ENCODE measurements at regions of chr9 and their contacts with region 1.

Region 1: DNA sequence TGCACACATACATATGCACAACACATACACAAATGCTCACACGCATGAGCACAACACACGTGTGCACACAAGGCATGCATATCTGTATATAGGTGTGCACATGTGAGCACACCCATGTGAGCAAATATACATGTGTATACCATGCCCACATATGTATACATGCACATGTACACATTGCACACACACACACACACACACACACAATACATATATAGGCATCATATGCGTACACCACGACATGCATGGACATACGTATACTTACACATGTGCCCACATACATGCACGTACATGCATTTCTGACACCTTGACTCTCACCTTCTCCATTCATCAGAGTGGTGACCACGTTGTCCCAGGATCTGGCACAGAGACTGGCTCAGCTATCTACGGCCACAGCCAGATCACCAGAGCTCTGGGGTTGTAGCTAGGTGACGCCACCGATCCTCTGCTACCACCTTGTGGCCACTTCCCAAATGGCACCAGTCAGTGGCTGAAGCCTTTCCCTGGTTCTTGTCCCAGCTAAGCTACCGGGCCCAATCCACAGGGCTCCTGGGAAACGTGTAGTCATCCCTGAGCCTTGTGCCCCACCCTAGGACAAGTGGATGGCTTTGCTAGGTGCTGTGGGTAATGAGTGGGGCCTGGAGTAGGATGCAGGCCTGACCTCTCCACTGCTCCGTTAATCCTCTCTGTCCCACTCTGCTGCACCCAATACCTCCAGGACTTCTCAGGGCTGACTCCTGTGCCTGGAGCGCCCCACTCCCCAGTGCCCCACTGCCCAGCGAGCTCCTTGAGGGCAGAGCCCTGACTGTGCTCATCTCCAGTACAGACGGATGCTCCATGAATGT is 194.4 kb downstream of the RGS3 start:
- H3K4me3 ChIP-seq: no peak overlapping the region
- H3K27ac ChIP-seq: no peak overlapping the region
- H3K4me1 ChIP-seq: no peaks in the 10 kb centered on the region
- CTCF ChIP-seq: peak; percentile 85

Region 2: DNA sequence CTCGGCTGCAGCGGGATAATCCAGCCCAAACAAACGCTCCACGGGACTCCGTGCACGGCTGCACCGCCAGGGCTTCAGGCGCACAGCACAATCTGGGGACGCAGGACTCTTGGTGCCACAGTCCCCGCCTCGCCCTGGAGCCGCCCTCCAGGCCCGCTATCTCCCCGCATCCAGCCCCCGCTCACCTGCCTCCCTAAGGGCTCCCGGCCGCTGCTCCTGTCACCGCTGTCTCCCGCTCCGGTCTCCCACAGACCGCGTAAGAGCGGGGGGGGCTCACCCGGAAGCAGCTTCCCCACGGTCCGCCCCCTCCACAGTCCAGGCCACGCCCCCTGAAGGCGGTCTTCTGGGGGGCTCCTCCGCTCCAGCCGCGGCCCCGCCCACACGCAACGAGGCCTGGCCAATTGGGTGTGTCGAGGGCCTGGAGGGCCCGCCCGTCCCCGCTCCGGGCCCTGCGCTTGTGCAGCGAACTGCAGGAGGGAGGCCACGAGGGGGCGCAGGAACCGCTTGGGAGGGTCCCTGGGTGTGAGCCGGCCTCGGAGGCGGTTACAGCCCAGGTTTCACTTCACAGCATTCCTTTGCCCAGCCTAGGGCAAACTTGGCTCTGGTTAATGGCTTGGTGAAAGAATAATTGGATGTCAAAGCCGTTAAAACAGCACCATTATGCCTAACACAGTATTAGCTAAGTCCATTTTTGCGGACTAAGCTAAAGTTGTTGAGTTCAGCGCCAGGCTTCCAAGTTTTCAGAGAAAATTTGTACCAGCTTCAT is 256.7 kb before region 1 on chr9 and contains the start of gene ALAD:
- CTCF ChIA-PET with region 1: interaction called, 11 read pairs
- POLR2A ChIA-PET with region 1: no interaction called
- H3K4me3 ChIP-seq: peak within 1 kb of the TSS; percentile 88
- H3K27ac ChIP-seq: no peak within 1 kb of the TSS; the same call in 1 of the 2 replicates
- H3K4me1 ChIP-seq: peaks cover 2% of the 10 kb centered on the region; the same call in 1 of the 2 replicates
- CTCF ChIP-seq: peak; percentile 91

Region 3: GRCh38 chr9:113446323-113446740 is 211.6 kb before region 1 on chr9:
- CTCF ChIA-PET with region 1: interaction called, 174 read pairs
- POLR2A ChIA-PET with region 1: no interaction called
- H3K4me3 ChIP-seq: no peak overlapping the region
- H3K27ac ChIP-seq: no peak overlapping the region
- H3K4me1 ChIP-seq: no peaks in the 10 kb centered on the region
- CTCF ChIP-seq: no peak

Region 4: GRCh38 chr9:113578882-113579282 is 79.0 kb before region 1 on chr9:
- CTCF ChIA-PET with region 1: interaction called, 15 read pairs
- POLR2A ChIA-PET with region 1: no interaction called
- H3K4me3 ChIP-seq: no peak overlapping the region
- H3K27ac ChIP-seq: no peak overlapping the region
- H3K4me1 ChIP-seq: no peaks in the 10 kb centered on the region
- CTCF ChIP-seq: no peak

Region 5: GRCh38 chr9:113602126-113603044 is 55.5 kb before region 1 on chr9:
- CTCF ChIA-PET with region 1: interaction called, 831 read pairs
- POLR2A ChIA-PET with region 1: no interaction called
- H3K4me3 ChIP-seq: no peak overlapping the region
- H3K27ac ChIP-seq: no peak overlapping the region
- H3K4me1 ChIP-seq: peaks cover 6% of the 10 kb centered on the region
- CTCF ChIP-seq: no peak

Region 6: DNA sequence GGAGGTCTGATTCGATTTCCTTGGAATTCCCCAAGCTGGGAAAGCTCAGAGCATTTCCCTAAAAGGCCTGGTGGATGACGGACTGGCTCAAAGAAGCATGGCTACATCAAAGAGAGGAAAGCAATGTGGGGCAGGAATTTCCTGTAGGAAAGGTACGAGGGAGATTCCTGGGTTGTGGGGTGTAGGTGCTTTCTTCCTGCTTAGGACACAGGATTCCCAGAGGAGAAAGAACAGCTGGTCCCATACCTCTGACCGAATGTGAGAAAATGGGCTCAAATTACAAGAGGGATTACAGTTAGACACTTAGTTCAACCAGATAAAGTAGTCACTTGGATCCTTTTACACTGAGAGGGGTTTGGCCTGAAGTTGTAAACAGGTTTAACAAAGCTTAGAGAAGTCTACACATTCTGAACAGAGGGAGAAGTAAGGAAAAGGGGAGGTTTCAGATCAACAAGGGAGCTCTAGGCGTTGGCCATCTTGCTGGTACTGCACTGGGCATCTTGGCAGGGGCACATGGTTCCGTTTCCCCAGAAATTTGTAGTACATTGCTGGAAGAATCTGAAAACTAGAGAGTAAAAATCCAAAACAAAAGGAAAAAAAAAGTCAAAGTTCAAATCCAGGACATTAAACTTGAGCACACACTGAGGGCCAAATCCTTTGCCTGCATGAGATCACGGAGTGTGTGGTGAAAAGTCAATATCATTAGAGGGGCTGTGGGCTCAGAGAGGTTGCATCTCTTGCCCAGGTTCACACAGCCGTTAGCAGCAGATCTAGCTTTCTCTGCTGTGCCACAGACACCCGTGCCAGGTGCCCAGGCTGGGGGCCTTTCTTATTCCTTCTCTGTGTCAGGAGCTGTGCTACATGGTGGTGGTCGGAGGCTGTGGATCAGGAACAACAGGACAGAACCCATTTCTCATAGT is 23.1 kb before region 1 on chr9:
- CTCF ChIA-PET with region 1: interaction called, 17 read pairs
- POLR2A ChIA-PET with region 1: no interaction called
- H3K4me3 ChIP-seq: no peak overlapping the region
- H3K27ac ChIP-seq: no peak overlapping the region
- H3K4me1 ChIP-seq: no peaks in the 10 kb centered on the region
- CTCF ChIP-seq: no peak

Region 7: DNA sequence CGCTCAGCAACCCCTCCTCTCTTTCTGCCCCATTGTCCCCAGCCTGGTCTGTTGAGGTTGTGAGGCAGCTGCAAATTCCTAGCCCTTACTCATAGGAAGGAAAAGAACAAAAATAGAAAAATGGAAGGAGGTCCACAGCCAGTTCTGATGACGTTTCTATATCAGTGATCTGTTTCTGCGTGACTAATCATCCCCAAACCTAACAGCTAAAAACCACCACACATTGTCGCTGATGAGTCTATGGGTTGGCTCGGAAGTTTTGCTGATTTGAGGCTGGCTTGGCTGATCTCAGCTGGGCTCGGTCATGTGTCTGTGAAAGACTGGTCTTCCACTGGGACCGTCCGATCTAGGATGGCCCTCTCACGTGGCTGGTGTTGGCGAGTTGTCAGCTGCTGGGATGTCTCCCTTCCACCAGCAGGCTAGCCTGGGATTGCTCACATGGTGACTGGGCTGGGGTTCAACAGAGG is 17.6 kb after region 1 on chr9:
- CTCF ChIA-PET with region 1: interaction called, 12 read pairs
- POLR2A ChIA-PET with region 1: no interaction called
- H3K4me3 ChIP-seq: no peak overlapping the region
- H3K27ac ChIP-seq: no peak overlapping the region
- H3K4me1 ChIP-seq: no peaks in the 10 kb centered on the region
- CTCF ChIP-seq: no peak

Region 8: DNA sequence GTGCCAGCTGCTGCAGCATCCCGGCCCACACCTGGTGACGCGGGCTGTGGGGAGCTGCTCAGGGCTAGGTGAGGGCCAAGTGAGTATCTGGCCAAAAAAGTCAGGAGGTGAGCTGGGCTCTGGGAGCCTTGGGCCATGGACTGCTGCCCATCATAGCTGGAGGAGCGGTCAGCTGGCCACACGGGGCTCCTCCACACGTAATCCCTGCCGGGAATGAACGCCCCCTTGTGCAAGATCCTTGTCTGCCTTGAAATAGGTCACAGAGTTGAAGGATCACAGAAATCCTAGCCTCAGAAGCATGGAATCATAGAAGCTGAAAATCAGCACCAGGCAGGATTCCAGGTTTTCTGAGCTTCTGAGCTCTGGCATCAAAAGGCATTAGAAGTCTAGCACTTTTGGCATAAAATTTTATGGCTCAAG is 480.6 kb after region 1 on chr9:
- CTCF ChIA-PET with region 1: no interaction called
- POLR2A ChIA-PET with region 1: no interaction called
- H3K4me3 ChIP-seq: no peak overlapping the region
- H3K27ac ChIP-seq: no peak overlapping the region
- H3K4me1 ChIP-seq: no peaks in the 10 kb centered on the region
- CTCF ChIP-seq: no peak

Measured in HEK293 (cell line).